Activated CD8-positive, alpha-beta T cell treated with anti-CD3 and anti-CD28 coated beads for 36 hours (primary cell): ENCODE measurements at regions of chr4 and their contacts with region 1.

Region 1: DNA sequence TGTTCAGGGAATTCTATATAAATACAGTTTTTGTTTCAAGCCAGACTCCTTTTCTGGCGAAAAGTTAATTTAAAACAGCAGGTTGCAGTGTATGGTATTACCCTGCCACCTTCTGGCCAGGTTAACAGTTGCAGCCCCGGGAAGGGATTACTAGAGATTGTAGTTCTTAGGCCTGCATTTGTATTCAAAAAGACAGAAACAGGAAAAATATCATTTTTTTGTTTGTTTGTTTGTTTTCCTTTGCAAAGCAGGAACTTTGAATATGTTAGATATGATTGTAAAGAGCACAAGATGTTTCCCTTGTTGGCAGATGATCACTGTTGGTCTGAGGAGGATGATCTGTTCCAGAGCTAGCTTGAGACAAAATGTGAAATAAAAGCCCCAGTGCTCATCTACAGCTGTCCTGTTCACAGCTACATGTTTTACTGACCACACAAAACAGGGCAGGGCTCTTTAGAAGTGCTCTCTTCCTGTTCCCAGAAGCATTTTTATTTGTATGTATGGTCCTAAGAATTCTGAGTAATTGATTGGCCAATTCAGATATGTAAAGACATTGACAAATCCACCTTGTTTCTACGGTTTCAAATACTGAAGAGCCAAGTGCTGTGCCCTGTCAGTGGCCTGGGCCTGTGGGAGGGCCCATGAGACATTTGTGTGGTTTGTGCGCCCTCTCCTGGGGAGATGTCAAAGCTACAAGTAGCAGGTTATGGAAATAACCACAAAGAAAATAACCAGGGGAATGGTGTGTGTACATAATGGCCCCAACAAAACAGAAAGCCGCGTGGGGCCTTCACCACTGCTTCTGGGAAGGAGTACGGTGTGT is 57.9 kb downstream of the CLDN22 start:
- DNase-seq: peak; percentile 89
- ATAC-seq: peak; percentile 98
- H3K4me3 Mint-ChIP-seq: no peak overlapping the region
- H3K27ac Mint-ChIP-seq: peak overlapping the region; percentile 28
- H3K4me1 Mint-ChIP-seq: peaks cover 3% of the 10 kb centered on the region
- H3K27me3 Mint-ChIP-seq: no peaks in the 10 kb centered on the region
- CTCF ChIP-seq: peak; percentile 82

Region 2: DNA sequence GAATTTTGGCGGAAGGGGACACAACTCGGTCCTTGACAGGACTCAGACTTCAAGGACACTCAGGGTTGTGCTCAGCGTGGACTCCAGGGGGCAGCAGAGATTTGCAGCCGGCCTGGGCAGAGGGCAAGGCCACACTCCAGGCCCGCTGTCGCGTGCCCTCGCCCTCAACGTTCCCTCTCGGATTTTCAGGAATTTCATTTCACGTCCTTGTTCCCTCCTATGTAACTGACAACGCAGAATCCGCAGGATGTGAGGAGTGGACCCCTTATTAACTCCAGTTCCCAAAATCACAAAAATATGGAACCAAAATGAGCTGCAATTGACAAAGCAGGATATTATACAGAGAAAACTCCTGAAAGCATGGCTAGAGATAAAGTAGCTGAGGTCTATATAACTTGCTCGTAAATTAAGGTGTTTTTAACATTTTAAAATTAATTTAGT is 323.9 kb before region 1 on chr4:
- CTCF ChIA-PET with region 1: interaction called, 73 read pairs
- POLR2A ChIA-PET with region 1: no interaction called
- intact Hi-C with region 1: loop called (anchors 1 kb)
- DNase-seq: peak; percentile 76
- ATAC-seq: peak; percentile 97
- H3K4me3 Mint-ChIP-seq: no peak overlapping the region
- H3K27ac Mint-ChIP-seq: no peak overlapping the region
- H3K4me1 Mint-ChIP-seq: no peaks in the 10 kb centered on the region
- H3K27me3 Mint-ChIP-seq: peaks cover 7% of the 10 kb centered on the region
- CTCF ChIP-seq: peak; percentile 91

Region 3: GRCh38 chr4:183080372-183081115 is 181.6 kb before region 1 on chr4:
- CTCF ChIA-PET with region 1: interaction called, 84 read pairs
- POLR2A ChIA-PET with region 1: no interaction called
- intact Hi-C with region 1: no loop called
- DNase-seq: no peak
- ATAC-seq: no peak
- H3K4me3 Mint-ChIP-seq: no peak overlapping the region
- H3K27ac Mint-ChIP-seq: no peak overlapping the region
- H3K4me1 Mint-ChIP-seq: no peaks in the 10 kb centered on the region
- H3K27me3 Mint-ChIP-seq: peaks cover 2% of the 10 kb centered on the region
- CTCF ChIP-seq: no peak

Region 4: DNA sequence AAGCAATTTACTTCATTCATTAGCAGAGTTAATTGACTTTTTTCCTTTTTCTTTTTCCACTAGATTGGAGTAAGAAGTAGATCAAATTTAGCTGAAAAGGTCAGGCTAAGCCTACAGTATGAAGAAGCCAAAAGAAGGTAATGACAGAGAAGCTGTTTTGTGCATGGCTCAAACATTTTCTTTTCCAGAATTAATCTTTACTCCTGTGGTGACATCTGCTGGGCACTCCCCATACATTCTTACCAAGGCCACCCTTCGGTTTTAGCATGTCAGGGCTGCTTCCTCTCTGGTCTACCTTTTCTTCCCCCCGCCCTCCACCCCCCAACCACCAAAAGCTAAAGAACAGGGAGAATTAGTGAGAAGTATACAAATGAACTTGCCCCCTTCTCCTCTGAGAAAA is 12.3 kb before region 1 on chr4:
- CTCF ChIA-PET with region 1: interaction called, 52 read pairs
- POLR2A ChIA-PET with region 1: no interaction called
- intact Hi-C with region 1: no loop called
- DNase-seq: peak; percentile 44
- ATAC-seq: no peak
- H3K4me3 Mint-ChIP-seq: no peak overlapping the region
- H3K27ac Mint-ChIP-seq: no peak overlapping the region
- H3K4me1 Mint-ChIP-seq: no peaks in the 10 kb centered on the region
- H3K27me3 Mint-ChIP-seq: no peaks in the 10 kb centered on the region
- CTCF ChIP-seq: no peak

Region 5: GRCh38 chr4:183407128-183407585 is 145.0 kb after region 1 on chr4:
- CTCF ChIA-PET with region 1: interaction called, 10 read pairs
- POLR2A ChIA-PET with region 1: no interaction called
- intact Hi-C with region 1: no loop called
- DNase-seq: peak; percentile 93
- ATAC-seq: peak; percentile 96
- H3K4me3 Mint-ChIP-seq: peak overlapping the region; percentile 74
- H3K27ac Mint-ChIP-seq: peak overlapping the region; percentile 80
- H3K4me1 Mint-ChIP-seq: peaks cover 10% of the 10 kb centered on the region
- H3K27me3 Mint-ChIP-seq: no peaks in the 10 kb centered on the region
- CTCF ChIP-seq: peak; percentile 70